ENCODE measurements at regions of chr14 and their contacts with region 1.

Region 1: DNA sequence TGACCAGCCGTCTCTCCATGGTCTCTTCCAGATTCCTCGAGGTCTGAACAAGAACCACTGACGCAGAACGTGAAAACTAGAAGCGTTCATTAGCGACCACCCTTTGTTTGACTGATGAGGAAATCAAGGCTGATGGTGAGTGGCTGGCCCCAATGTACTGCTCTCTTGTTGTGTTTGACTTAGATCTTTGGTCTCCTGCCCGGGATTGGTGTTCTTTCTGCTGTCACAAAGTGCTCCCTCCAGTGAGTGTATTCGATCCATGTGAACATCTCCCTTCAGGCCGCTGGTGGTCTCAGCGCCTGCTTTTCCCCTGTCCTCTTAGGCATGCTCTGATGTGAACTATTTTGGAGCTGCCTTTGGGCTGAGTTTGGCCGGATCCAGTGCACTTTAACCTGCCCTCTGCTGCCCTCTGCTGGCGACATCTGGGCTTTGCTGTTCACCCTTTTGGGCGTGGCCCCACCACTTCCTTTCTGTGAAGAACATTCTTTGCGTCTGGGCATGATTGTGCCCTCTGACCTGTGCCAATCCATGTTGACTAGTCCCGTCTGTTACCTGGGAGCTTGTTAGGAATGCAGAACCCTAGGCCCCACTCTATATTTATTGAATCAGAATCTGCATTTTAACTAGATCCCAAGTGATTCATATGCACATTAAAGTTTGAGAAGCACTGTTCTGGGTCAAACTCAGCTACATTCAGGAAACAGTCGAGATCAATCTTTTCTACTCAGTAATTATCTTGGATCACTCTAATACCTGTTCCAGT is 279.2 kb downstream of the TTC6 start:
- DNase-seq: peak; percentile 66
- H3K4me3 ChIP-seq: no peak overlapping the region
- H3K27ac ChIP-seq: peak overlapping the region; percentile 14
- H3K4me1 ChIP-seq: peaks cover 4% of the 10 kb centered on the region
- H3K27me3 ChIP-seq: no peaks in the 10 kb centered on the region
- CTCF ChIP-seq: peak; percentile 86 to 89

Region 2: GRCh38 chr14:37246427-37246914 is 628.1 kb before region 1 on chr14:
- CTCF ChIA-PET with region 1: interaction called, 6 read pairs
- dilution Hi-C with region 1: no loop called
- in situ Hi-C with region 1: loop called (anchors 10 kb)
- intact Hi-C with region 1: loop called (anchors 1 kb)
- DNase-seq: peak; percentile 21
- H3K4me3 ChIP-seq: no peak overlapping the region
- H3K27ac ChIP-seq: no peak overlapping the region
- H3K4me1 ChIP-seq: no peaks in the 10 kb centered on the region
- H3K27me3 ChIP-seq: no peaks in the 10 kb centered on the region
- CTCF ChIP-seq: peak; percentile 62 to 65

Region 3: DNA sequence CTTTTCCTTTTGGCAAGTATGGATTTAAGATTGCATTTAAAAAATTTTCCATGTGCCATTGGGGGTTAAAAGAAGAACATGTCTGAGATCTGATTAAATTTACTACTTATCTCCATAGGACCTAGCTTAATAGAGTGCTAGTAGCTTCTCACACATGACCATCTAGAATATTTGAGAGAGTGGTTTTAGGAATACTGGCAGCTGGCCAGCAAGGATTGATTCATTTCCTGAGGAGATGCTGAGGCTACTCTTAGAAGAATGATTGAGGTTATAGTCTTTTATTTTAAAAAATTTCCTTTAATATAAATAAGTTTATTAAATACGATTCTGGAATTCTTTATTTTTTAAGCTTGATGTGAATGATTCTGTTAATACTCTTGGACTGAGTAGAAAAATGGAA is 620.7 kb before region 1 on chr14:
- CTCF ChIA-PET with region 1: interaction called, 6 read pairs
- dilution Hi-C with region 1: no loop called
- in situ Hi-C with region 1: loop called (anchors 10 kb)
- intact Hi-C with region 1: no loop called
- DNase-seq: peak; percentile 62
- H3K4me3 ChIP-seq: no peak overlapping the region
- H3K27ac ChIP-seq: no peak overlapping the region
- H3K4me1 ChIP-seq: no peaks in the 10 kb centered on the region
- H3K27me3 ChIP-seq: no peaks in the 10 kb centered on the region
- CTCF ChIP-seq: no peak